HCT116 (cell line): ENCODE measurements at regions of chr14 and their contacts with region 1.

Region 1: GRCh38 chr14:37150414-37150813 is 22.0 kb downstream of the SLC25A21 start:
- DNase-seq: no peak
- ATAC-seq: peak; percentile 91
- H3K4me3 ChIP-seq: no peak overlapping the region
- H3K27ac ChIP-seq: no peak overlapping the region
- H3K4me1 ChIP-seq: peaks cover 0 to 3% of the 10 kb centered on the region in 2 experiments; a peak in 1 of 4 replicates
- H3K27me3 ChIP-seq: no peaks in the 10 kb centered on the region
- CTCF ChIP-seq: peak; percentile 62 to 89 (median 69); a peak in 5 of 6 replicates
- POLR2A ChIP-seq: no peak
- RAD21 ChIP-seq: peak; percentile 68

Region 2: DNA sequence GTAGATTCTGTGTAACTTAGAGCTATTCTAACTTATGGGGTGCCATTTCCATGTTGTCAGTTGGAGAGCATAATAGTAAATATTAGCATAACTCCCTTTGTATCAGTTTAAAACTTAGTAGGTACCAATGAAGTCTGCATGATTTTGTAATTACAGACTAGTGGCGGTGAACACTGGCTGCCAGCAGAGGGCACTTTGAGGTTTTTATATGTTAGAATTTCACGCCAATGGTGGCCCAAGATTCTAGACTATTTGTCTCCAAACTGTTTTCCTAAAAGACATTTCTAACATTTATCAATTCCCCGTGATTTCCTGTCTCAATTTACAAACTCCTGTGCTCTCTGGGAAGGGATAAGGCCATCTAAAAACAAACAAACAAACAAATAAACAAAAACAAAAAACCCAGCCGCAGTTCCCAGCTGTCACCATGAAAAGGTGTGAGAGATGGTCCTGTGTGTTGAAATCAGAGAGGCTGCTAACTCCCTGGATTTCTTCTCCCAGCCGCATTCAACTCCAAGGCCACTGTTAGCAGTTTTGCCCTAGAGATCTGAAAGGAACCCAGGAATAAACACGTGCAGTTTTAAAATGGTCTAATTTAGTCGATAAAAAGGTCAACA is 1266.6 kb before region 1 on chr14:
- CTCF ChIA-PET with region 1: interaction called, 3 read pairs
- POLR2A ChIA-PET with region 1: no interaction called
- RAD21 ChIA-PET with region 1: no interaction called
- intact Hi-C with region 1: loop called (anchors 10 kb)
- DNase-seq: no peak
- ATAC-seq: peak; percentile 70
- H3K4me3 ChIP-seq: no peak overlapping the region
- H3K27ac ChIP-seq: no peak overlapping the region
- H3K4me1 ChIP-seq: peaks cover 5 to 6% of the 10 kb centered on the region in 2 experiments
- H3K27me3 ChIP-seq: no peaks in the 10 kb centered on the region
- CTCF ChIP-seq: peak; percentile 46 to 84 (median 76); a peak in 5 of 6 replicates
- POLR2A ChIP-seq: no peak
- RAD21 ChIP-seq: peak; percentile 56

Region 3: GRCh38 chr14:36647824-36648753 is 502.3 kb before region 1 on chr14:
- CTCF ChIA-PET with region 1: interaction called, 7 read pairs
- POLR2A ChIA-PET with region 1: no interaction called
- RAD21 ChIA-PET with region 1: no interaction called
- intact Hi-C with region 1: loop called (anchors 5 kb)
- DNase-seq: no peak
- ATAC-seq: peak; percentile 83
- H3K4me3 ChIP-seq: no peak overlapping the region
- H3K27ac ChIP-seq: no peak overlapping the region
- H3K4me1 ChIP-seq: peaks cover 0 to 4% of the 10 kb centered on the region in 2 experiments; a peak in 2 of 4 replicates
- H3K27me3 ChIP-seq: no peaks in the 10 kb centered on the region
- CTCF ChIP-seq: peak; percentile 21 to 41 (median 36); a peak in 4 of 6 replicates
- POLR2A ChIP-seq: no peak
- RAD21 ChIP-seq: peak; percentile 55

Region 4: GRCh38 chr14:36747411-36748184 is 402.8 kb before region 1 on chr14:
- CTCF ChIA-PET with region 1: interaction called, 12 read pairs
- POLR2A ChIA-PET with region 1: no interaction called
- RAD21 ChIA-PET with region 1: no interaction called
- intact Hi-C with region 1: no loop called
- DNase-seq: no peak
- ATAC-seq: peak; percentile 86
- H3K4me3 ChIP-seq: no peak overlapping the region
- H3K27ac ChIP-seq: no peak overlapping the region
- H3K4me1 ChIP-seq: no peaks in the 10 kb centered on the region
- H3K27me3 ChIP-seq: no peaks in the 10 kb centered on the region
- CTCF ChIP-seq: peak; percentile 48 to 84 (median 70); a peak in 5 of 6 replicates
- POLR2A ChIP-seq: no peak
- RAD21 ChIP-seq: peak; percentile 31

Region 5: GRCh38 chr14:36773136-36773540 is 377.3 kb before region 1 on chr14:
- CTCF ChIA-PET with region 1: interaction called, 11 read pairs
- POLR2A ChIA-PET with region 1: no interaction called
- RAD21 ChIA-PET with region 1: no interaction called
- intact Hi-C with region 1: no loop called
- DNase-seq: peak; percentile 33
- ATAC-seq: peak; percentile 93
- H3K4me3 ChIP-seq: no peak overlapping the region
- H3K27ac ChIP-seq: no peak overlapping the region
- H3K4me1 ChIP-seq: peaks cover 3 to 6% of the 10 kb centered on the region in 2 experiments; a peak in 2 of 4 replicates
- H3K27me3 ChIP-seq: no peaks in the 10 kb centered on the region
- CTCF ChIP-seq: peak; percentile 19 to 59 (median 43); a peak in 4 of 6 replicates
- POLR2A ChIP-seq: no peak
- RAD21 ChIP-seq: peak; percentile 43

Region 6: GRCh38 chr14:37417833-37418232 is 267.4 kb after region 1 on chr14:
- CTCF ChIA-PET with region 1: no interaction called
- POLR2A ChIA-PET with region 1: no interaction called
- RAD21 ChIA-PET with region 1: no interaction called
- intact Hi-C with region 1: no loop called
- DNase-seq: no peak
- ATAC-seq: no peak
- H3K4me3 ChIP-seq: no peak overlapping the region
- H3K27ac ChIP-seq: no peak overlapping the region
- H3K4me1 ChIP-seq: no peaks in the 10 kb centered on the region
- H3K27me3 ChIP-seq: no peaks in the 10 kb centered on the region
- CTCF ChIP-seq: no peak
- POLR2A ChIP-seq: no peak
- RAD21 ChIP-seq: no peak